Left colon (tissue), 2 donors: ENCODE measurements at regions of chr12 and their contacts with region 1.

Region 1: GRCh38 chr12:1830981-1831963 is 10.9 kb downstream of the LRTM2 start:
- DNase-seq: peak; percentile 44 to 53
- ATAC-seq: peak; percentile 87

Region 2: DNA sequence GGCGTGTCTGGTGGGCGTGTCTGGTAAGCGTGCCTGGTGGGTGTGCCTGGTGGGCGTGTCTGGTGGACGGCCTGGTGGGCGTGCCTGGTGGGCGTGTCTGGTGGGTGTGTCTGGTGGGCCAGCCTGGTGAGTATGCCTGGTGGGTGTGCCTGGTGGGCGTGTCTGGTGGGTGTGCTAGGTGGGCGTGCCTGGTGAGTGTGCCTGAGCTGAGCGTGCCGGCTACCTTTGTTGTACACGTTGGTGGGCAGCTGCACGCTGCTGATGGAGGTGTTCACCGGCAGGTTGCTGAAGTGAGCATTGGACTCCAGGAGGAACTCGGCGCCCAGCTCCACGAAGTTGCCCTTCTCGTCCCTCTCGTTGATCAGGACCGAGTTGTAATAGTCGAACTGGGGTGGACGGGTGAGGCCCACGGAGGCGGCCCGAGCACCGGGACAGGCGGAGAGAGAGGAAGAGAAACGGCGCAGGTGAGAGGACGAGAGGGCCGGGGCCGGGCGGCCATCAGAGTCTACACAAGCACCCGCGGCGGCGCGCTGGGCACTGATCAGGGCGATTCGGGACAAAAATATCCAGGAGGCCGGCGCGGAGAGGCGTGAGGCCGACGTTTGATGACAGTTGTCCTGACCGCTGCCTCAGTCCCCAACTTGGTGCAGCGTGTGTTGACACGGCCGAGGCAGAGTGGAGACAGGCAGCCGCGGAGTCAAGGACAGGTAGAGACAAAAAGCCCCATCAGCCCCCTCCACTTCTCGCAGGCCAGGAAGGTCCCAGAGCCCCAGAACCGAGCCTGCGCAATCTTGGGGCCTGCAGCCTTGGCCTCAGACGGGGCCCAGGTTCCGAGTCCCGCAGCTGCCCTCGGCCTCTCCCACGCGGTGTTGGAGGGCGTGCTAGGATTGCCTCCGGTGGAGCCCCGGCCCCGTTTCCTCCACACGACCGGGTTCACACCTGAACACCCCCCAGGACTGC is 76.7 kb after region 1 on chr12:
- intact Hi-C with region 1: loop called (anchors 10 kb)
- DNase-seq: peak; percentile 63 to 74
- ATAC-seq: peak; percentile 93